ENCODE measurements at regions of chr4 and their contacts with region 1.

Region 1: DNA sequence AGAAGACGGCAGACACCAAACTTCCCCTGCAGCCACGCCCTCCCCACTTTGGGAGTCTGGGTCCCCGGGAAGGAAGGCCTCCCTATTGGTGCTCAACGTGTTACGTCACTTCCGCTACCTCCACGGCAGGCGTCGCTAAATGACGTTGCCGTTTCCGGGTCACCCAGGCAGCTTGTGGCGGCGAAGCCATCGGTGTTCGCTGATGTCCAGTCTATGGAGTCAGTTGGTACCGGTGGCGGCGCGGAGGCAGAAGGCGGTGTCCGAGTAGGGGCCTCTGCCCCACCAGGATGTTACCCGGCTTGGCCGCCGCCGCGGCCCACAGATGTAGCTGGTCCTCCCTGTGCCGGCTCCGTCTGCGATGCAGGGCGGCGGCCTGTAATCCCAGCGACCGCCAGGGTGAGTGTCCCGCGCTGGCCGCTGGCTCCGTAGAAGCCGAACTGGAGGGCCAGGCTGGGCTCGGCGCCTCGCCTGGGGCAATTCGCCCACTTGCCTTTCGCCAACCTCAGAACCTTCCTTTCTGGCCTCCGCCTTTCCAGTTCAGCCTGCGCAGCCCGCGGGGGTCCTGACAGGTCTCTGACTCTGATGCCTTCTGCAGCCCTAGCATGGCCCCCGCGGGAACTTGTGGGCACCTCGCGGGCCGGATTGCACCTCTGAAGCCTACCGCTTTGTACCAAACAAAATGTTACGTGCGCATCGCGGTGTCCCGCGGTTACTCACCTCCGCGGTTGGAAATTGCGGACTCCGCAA is at the start of gene SLC30A9:
- DNase-seq: peak; percentile 96
- H3K4me3 ChIP-seq: peak within 1 kb of the TSS; percentile 94
- H3K27ac ChIP-seq: no peak within 1 kb of the TSS
- H3K4me1 ChIP-seq: peaks cover 26% of the 10 kb centered on the region
- CTCF ChIP-seq: no peak
- total RNA-seq, gene SLC30A9: 33.8 and 60.2 TPM in 2 replicates

Region 2: DNA sequence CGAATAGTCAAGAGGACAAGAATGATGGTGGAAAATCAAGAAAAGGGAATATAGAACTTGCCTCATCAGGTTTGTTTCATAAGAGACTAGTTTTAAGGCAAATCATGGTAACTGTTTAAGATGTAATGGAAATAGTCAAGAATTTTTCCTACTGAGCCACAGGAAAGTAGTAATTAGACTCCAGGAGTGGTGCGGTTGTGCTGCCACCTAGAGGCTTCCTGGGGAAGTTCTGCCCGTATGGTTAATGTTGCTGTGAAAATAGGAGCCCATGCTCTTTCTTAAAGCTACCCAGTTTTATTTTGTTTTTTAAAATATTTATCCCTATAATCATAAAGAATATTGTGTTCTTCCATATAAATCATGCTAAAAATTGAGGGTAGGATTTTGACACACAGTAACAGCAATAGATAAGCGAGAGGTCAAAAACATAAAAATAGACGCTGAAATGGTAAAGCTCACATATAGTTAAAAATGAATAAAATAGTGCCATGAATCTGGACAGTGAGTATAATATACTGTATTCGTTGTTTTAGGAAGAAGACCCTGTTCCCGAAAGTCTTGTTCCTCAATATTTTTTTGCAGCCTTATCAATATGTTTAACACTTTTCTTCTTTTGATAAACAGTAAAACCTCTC is 329.0 kb before region 1 on chr4:
- CTCF ChIA-PET with region 1: no interaction called
- POLR2A ChIA-PET with region 1: no interaction called
- intact Hi-C with region 1: no loop called
- DNase-seq: peak; percentile 46
- H3K4me3 ChIP-seq: no peak overlapping the region
- H3K27ac ChIP-seq: no peak overlapping the region
- H3K4me1 ChIP-seq: no peaks in the 10 kb centered on the region
- CTCF ChIP-seq: peak; percentile 99

Region 3: DNA sequence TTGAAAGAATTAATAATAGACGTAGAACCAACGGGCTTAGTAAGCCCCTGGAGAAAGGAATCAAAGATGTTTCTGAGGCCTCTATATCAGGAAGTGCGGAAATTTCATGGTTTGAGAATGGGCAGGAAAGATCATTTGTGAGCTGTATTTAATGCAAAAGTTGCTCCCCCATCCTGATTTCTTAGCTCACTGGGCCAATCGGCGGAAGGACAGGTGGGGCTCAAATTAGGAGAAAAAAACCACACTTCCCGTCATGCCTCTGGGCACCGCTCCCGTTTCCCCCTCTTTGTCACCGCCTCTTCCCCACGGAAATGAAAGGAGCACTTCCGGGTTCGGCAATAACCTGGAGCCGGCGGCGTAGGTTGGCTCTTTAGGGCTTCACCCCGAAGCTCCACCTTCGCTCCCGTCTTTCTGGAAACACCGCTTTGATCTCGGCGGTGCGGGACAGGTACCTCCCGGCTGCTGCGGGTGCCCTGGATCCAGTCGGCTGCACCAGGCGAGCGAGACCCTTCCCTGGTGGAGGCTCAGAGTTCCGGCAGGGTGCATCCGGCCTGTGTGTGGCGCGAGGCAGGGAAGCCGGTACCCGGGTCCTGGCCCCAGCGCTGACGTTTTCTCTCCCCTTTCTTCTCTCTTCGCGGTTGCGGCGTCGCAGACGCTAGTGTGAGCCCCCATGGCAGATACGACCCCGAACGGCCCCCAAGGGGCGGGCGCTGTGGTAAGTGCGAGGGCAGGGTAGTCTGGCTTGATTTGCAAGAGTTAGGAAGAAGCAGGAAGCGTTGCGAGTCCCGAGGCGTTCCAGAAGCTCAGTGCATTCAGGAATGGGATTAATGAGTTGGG is 55.5 kb before region 1 on chr4 and contains the start of gene TMEM33:
- CTCF ChIA-PET with region 1: no interaction called
- POLR2A ChIA-PET with region 1: interaction called, 8 read pairs
- intact Hi-C with region 1: loop called (anchors 2 kb)
- DNase-seq: peak; percentile 90
- H3K4me3 ChIP-seq: peak within 1 kb of the TSS; percentile 97
- H3K27ac ChIP-seq: peak within 1 kb of the TSS; percentile 44
- H3K4me1 ChIP-seq: peaks cover 29% of the 10 kb centered on the region
- CTCF ChIP-seq: 0 out of 2 replicates have a peak, but pooled peaks have one; percentile 11
- total RNA-seq, gene TMEM33: 21.0 and 25.7 TPM in 2 replicates

Region 4: DNA sequence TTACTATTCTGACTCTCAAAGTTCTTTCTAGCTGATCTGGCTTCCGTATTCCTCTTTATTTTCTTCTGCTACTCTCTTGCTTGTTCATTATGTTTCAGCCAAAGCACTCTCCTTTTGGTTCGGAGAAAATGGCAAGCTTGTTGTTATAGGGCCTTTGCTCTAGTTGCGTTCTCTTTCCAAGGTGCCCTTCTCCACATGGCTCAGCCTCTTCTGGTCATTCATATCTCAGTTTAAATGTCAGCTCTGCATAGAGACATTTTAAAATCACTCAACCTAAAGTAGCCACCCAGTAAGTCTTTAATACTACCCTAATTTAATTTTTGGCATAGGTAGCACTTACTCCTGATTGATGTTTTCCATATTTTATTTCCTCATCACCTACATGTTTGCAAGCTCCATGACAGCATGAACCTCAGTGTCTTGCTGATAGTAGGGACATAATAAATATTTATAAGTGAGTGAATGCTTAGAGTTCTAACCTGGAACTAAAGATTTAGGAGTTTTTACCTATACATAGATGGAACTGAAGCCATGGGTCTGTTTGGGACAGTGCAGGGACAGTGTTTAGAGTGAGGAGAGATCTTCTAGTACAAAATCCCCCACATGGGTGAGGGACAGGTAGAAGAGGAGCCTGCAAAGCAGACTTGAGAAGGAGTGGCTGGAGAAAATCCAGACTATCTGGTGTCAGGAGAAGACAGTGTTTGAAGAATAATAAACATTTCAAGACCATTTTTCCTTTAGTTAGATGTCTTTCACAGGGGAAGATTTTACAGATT is 17.7 kb after region 1 on chr4:
- CTCF ChIA-PET with region 1: no interaction called
- POLR2A ChIA-PET with region 1: no interaction called
- intact Hi-C with region 1: no loop called
- DNase-seq: no peak
- H3K4me3 ChIP-seq: no peak overlapping the region
- H3K27ac ChIP-seq: no peak overlapping the region
- H3K4me1 ChIP-seq: no peaks in the 10 kb centered on the region
- CTCF ChIP-seq: no peak

Measured in OCI-LY7 (cell line).